ENCODE measurements at regions of chr6 and their contacts with region 1.

Region 1: DNA sequence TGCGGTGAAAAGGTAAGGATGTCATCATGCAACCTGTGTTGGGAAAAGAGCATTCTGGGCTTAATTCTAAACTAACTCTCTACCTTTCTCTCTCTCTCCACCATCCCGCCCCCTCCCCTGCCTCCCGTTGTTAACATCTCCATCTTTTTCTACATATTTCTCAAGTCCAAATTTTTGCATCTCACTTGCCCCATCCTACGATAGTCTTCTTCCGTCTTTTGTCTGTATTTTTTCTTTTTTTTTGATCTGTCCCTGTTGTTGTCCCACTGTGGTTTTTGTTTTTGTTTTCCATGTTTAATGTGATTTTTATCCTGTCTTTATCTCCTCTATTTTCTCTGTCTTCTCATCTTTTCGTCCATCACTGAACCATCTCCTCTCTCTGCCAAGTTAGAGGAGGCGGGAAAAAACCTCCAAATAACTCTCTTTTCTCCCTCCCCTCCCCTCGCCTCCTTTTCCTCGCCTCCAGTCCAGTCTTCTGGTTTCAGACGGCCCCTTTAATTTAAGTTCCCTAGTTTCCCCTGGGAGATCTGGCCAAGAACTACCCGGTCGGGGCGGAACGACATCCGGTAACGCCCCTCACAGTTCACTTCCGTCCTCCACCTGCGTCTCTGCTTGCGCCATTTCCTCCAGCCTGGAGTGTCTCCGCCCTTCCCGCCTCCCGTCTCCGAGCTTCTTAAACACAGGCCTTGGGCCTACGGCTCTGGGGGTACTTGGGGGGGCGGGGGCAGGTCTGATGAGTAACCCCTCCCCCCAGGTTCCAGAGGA is at the start of gene NFKBIL1:
- DNase-seq: peak; percentile 94 to 96 (median 96)
- ATAC-seq: peak; percentile 92 to 95 (median 94)
- H3K4me3 ChIP-seq: peak within 1 kb of the TSS; percentile 32 to 61 (median 58)
- H3K27ac ChIP-seq: peak within 1 kb of the TSS; percentile 52 to 71 (median 68)
- H3K4me1 ChIP-seq: peaks cover 0 to 16% (median 7%) of the 10 kb centered on the region in 4 donors
- H3K27me3 ChIP-seq: no peaks in the 10 kb centered on the region
- CTCF ChIP-seq: no peak
- POLR2A ChIP-seq: peak; percentile 37
- total RNA-seq, gene NFKBIL1: 7.5 to 10.2 (median 8.3) TPM

Region 2: GRCh38 chr6:30500421-30501355 is 1046.5 kb before region 1 on chr6:
- intact Hi-C with region 1: no loop called
- DNase-seq: no peak
- ATAC-seq: peak; percentile 44 to 80 (median 65)
- H3K4me3 ChIP-seq: no peak overlapping the region
- H3K27ac ChIP-seq: peak overlapping the region in 1 of 3 donors; percentile 10
- H3K4me1 ChIP-seq: no peaks in the 10 kb centered on the region
- H3K27me3 ChIP-seq: no peaks in the 10 kb centered on the region
- CTCF ChIP-seq: no peak
- POLR2A ChIP-seq: no peak

Region 3: DNA sequence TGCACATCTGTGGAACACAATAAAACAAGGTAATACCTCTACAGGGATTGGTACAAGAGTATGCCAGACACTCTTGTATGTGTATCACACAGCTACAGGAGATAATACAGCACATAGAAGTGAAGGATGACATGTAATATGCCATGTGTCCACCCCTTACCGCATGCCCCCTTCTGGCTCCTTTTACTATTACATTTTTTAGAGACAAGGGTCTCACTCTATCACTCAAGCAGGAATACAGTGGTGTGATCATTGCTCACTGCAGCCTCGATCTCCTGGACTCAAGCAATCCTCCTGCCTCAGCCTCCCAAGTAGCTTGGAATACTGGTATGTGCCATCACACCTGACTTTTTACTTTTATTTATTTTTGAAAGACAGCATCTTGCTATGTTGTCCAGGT is 49.9 kb after region 1 on chr6:
- intact Hi-C with region 1: loop called (anchors 5 kb)
- DNase-seq: no peak
- ATAC-seq: peak; percentile 49 to 60 (median 54)
- H3K4me3 ChIP-seq: no peak overlapping the region
- H3K27ac ChIP-seq: no peak overlapping the region
- H3K4me1 ChIP-seq: peaks cover 0 to 6% (median 1%) of the 10 kb centered on the region in 4 donors
- H3K27me3 ChIP-seq: no peaks in the 10 kb centered on the region
- CTCF ChIP-seq: peak; percentile 32 to 42 (median 34)
- POLR2A ChIP-seq: no peak